ENCODE measurements at regions of chr2 and their contacts with region 1.

Region 1: DNA sequence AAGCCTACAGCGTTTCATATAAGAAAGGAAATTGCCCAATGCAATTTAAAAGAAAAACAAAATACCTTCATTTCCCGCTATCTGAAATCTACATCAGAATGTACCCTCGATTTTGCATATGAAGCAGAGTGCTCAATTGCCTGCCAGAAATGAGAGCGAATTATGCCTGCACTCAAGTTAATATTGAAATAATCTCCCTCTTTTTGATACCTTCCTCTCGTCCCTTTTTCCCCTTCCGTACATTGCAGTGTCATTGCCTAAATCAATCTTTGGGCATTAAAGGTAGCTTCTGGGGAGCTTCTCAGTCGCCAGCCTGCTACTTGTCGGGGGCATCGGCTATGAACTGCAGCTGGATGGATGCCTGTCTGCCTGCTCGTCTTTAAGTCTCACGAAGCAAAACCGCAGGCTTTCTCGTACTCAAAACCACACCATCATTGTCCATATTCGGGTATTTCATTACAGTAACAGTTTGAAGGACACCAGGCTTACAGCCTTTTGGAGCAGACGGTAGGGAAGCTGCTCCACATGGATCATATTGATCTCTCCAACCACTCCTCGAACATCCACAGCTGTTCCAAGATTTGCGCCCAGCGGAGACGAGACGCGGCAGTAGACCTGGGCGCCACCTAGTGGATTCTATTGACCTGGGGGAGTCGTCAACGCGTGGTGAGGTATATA is 64.0 kb upstream of the HNRNPA3 start:
- DNase-seq: peak; percentile 85
- H3K4me3 ChIP-seq: peak overlapping the region in 2 of 3 experiments; percentile 29 to 62
- H3K27ac ChIP-seq: no peak overlapping the region
- H3K4me1 ChIP-seq: peaks cover 10% of the 10 kb centered on the region
- H3K27me3 ChIP-seq: peaks cover 9% of the 10 kb centered on the region in 2 experiments
- CTCF ChIP-seq: peak; percentile 87 to 89
- POLR2A ChIP-seq: no peak

Region 2: GRCh38 chr2:176115883-176116813 is 1032.5 kb before region 1 on chr2 and contains the start of gene HOXD10:
- CTCF ChIA-PET with region 1: interaction called, 23 read pairs
- POLR2A ChIA-PET with region 1: no interaction called
- dilution Hi-C with region 1: no loop called
- intact Hi-C with region 1: no loop called
- DNase-seq: peak; percentile 78
- H3K4me3 ChIP-seq: peak within 1 kb of the TSS in 1 of 3 experiments; percentile 10
- H3K27ac ChIP-seq: no peak within 1 kb of the TSS
- H3K4me1 ChIP-seq: peaks cover 4% of the 10 kb centered on the region
- H3K27me3 ChIP-seq: peaks cover 86 to 98% of the 10 kb centered on the region in 2 experiments
- CTCF ChIP-seq: peak; percentile 59 to 78
- POLR2A ChIP-seq: no peak
- total RNA-seq, gene HOXD10: not detected in 2 replicates

Region 3: DNA sequence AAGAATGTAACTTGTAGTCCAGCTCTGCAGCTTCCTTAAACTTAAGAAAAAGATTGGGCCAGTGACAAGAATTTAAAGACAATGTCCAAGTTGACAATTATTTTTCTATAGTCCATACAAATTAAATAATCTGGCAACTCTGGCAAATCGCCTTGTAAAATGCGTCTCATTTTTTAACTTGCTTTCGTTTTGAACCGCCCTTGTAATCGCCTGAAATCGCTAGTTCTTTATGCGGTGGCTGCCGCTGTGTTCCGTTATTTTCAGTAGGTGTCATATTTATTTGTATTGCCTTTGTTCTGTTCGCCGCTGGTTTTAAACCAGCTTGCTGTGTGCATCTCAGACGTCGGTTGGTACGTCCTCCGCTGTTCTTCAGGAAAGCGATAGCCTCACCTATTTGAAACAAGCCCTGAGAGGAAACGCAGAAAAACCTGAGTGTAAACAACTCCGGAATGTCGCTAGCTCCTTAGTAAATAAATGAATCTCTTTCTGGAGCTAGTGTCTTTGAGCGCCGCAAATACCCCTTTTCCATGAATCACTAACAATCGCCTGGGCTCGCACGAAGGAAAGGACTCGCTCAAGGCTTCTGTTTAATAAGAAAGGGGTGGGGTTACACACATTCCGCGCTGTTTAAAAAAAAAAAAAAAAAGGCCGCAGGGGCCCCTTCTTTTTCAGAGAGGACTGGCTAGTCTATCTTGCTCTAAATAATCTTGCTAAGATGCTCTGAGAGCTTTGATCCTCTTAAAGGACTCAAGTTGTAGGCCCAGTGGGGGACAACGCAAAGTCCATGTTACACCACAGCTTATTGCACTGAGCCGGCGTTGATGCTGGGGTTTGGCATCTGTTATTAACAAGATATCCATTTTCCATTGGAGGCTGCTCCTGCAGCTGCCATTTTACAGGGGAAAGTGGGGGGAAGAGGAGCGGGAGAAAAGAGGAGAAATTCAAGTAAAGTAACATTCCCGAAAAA is 1016.1 kb before region 1 on chr2:
- CTCF ChIA-PET with region 1: interaction called, 78 read pairs
- POLR2A ChIA-PET with region 1: no interaction called
- dilution Hi-C with region 1: no loop called
- intact Hi-C with region 1: loop called (anchors 1 kb)
- DNase-seq: peak; percentile 86
- H3K4me3 ChIP-seq: peak overlapping the region; percentile 39 to 93 (median 88)
- H3K27ac ChIP-seq: peak overlapping the region; percentile 67
- H3K4me1 ChIP-seq: peaks cover 48% of the 10 kb centered on the region
- H3K27me3 ChIP-seq: no peaks in the 10 kb centered on the region
- CTCF ChIP-seq: no peak
- POLR2A ChIP-seq: no peak

Region 4: DNA sequence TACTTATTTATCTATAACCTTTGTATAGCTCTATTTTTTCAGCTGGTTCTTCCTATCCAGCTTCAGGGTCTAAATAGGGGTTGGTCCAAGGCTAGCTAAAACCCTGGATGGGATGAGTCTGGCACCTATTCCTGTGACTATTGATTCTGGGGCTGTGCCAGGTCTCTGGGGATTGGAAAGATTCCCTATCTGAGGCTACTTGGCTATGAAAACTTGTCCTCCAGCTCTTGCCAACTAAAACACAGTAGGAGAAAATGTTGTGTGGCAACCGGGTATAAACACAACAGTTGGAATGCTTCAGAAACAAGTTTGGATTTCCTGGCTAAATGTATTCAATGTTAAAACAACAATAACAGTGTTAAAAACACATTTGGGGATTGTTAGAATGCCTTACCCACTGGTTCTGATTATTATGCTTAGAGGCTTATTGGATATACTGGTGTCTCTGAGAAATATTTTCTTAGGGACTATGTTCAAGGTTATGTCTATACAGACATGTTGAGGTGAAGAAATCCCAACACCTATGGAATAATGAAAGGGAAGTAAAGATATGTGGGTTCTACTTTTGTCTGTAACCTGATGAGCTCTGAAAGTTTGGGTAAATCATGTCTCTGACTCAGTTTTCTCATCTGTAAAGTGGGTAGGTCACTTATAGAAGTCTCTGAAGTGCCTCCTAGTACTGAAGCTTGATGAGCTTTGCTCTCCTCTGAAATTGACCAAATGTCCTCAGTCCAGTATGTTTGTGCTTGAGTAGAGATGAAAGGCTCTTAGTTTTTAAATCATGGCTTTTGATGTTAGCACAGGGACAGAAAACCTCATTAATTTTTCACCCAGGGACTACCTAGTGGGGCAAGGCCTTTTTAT is 418.7 kb before region 1 on chr2:
- CTCF ChIA-PET with region 1: no interaction called
- POLR2A ChIA-PET with region 1: no interaction called
- dilution Hi-C with region 1: no loop called
- intact Hi-C with region 1: loop called (anchors 5 kb)
- DNase-seq: peak; percentile 95
- H3K4me3 ChIP-seq: no peak overlapping the region
- H3K27ac ChIP-seq: no peak overlapping the region
- H3K4me1 ChIP-seq: no peaks in the 10 kb centered on the region
- H3K27me3 ChIP-seq: peaks cover 0 to 2% of the 10 kb centered on the region in 2 experiments
- CTCF ChIP-seq: no peak
- POLR2A ChIP-seq: no peak

Region 5: DNA sequence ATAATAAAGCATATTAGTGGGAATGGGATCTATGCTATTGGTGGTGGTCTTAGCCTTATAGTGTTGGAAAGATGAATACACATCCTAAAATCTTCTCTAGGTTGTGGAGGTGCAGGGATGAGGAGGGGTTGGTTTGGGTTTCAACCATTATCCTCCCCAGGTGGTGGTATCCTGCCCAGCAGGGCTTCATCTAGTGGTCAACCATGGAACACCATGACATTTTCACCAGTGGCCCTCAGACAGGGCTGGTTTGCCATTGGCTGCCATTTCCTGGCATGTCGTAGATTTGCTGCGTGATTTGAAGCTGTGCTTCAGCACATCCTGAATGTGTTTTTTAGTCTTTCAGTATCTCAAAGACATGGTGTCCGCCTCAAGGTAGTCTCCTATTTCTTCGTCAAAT is 327.3 kb before region 1 on chr2:
- CTCF ChIA-PET with region 1: interaction called, 15 read pairs
- POLR2A ChIA-PET with region 1: no interaction called
- dilution Hi-C with region 1: no loop called
- intact Hi-C with region 1: loop called (anchors 1 kb)
- DNase-seq: no peak
- H3K4me3 ChIP-seq: no peak overlapping the region
- H3K27ac ChIP-seq: no peak overlapping the region
- H3K4me1 ChIP-seq: no peaks in the 10 kb centered on the region
- H3K27me3 ChIP-seq: peaks cover 13 to 19% of the 10 kb centered on the region in 2 experiments
- CTCF ChIP-seq: peak in 1 of 2 donors; percentile 15
- POLR2A ChIP-seq: no peak

Region 6: DNA sequence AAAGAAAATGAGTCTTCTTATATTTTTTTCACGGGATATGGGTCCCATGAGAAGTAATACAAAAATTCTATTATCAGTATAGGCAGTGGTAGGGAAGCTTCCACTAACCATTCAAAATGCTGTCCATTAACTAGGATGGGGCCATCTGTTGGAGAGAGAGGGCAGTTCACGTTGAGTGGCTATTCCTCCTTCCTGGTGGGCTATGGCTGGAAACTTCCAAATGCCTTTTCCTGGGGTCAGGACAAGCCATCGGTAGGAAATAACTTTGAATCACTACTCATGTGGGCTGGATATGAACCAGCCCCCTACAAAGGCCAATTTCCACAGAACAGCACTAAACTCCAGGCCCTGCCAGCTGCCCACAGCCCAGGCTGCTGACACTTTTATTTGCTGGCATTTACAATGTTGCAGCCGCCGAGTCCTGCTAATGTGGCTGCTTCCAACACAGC is 92.1 kb before region 1 on chr2:
- CTCF ChIA-PET with region 1: no interaction called
- POLR2A ChIA-PET with region 1: no interaction called
- dilution Hi-C with region 1: no loop called
- intact Hi-C with region 1: loop called (anchors 2 kb)
- DNase-seq: no peak
- H3K4me3 ChIP-seq: no peak overlapping the region
- H3K27ac ChIP-seq: no peak overlapping the region
- H3K4me1 ChIP-seq: no peaks in the 10 kb centered on the region
- H3K27me3 ChIP-seq: no peaks in the 10 kb centered on the region
- CTCF ChIP-seq: peak in 1 of 2 donors; percentile 19
- POLR2A ChIP-seq: no peak